ENCODE measurements at regions of chr6 and their contacts with region 1.

Region 1: DNA sequence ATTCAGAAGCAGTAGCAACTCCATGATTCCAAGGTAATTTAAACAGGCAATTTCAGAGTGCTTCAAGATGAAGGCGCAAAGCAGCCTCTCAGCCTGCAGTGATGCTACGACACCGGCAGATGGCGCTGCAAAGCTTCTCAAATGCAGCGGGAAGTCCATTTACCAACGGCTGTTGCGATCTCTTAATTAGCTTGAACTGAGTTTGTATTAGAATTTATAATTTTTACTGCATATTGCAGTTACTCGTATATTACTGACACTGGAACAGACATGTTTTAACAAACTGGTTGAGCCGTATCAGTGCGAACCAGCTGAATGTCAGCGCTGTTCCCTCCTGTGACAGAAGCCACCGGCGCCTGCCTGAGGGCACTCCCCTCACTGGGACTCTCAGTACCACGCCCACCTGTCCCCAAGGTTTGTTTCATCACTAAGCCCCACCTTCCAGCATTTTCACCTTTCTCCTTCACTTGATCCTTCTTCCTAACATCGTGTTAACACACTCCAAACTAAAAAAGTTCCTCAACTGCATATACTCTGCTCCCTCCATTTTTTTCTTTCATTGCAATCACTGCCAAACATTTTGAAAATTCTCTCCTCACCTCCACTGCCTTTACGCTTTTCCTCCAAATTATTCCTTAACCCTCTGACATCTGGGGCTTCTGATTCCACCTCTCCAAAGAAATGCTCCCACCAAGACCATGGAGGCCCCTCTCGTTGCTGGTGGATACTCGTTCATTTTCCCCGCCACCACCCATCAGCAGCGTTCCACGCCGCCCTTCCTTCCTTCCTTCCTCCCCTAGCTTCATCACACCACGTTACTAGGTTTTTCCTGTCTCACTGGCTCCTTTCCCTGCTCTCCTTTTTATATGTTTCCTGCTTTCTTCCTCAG is 14.5 kb downstream of the GNL1 start:
- DNase-seq: peak; percentile 62
- ATAC-seq: peak; percentile 88
- H3K4me3 ChIP-seq: peak overlapping the region; percentile 60
- H3K27ac ChIP-seq: no peak overlapping the region
- H3K4me1 ChIP-seq: peaks cover 7% of the 10 kb centered on the region; the same call in 1 of the 2 replicates
- H3K27me3 ChIP-seq: no peaks in the 10 kb centered on the region
- CTCF ChIP-seq: peak; percentile 94 to 99 (median 96)
- EP300 ChIP-seq: no peak
- POLR2A ChIP-seq: no peak
- RAD21 ChIP-seq: peak; percentile 68

Region 2: GRCh38 chr6:30154709-30155519 is 386.8 kb before region 1 on chr6:
- CTCF ChIA-PET with region 1: no interaction called
- POLR2A ChIA-PET with region 1: no interaction called
- RAD21 ChIA-PET with region 1: no interaction called
- SMC1A ChIA-PET with region 1: no interaction called
- in situ Hi-C with region 1: no loop called
- intact Hi-C with region 1: no loop called
- DNase-seq: no peak
- ATAC-seq: no peak
- H3K4me3 ChIP-seq: no peak overlapping the region
- H3K27ac ChIP-seq: no peak overlapping the region
- H3K4me1 ChIP-seq: peaks cover 4% of the 10 kb centered on the region; the same call in 1 of the 2 replicates
- H3K27me3 ChIP-seq: peaks cover 2% of the 10 kb centered on the region in 2 experiments; a peak in 3 of 4 replicates
- CTCF ChIP-seq: no peak
- EP300 ChIP-seq: no peak
- POLR2A ChIP-seq: no peak
- RAD21 ChIP-seq: no peak

Region 3: GRCh38 chr6:30340589-30341054 is 201.1 kb before region 1 on chr6:
- CTCF ChIA-PET with region 1: no interaction called
- POLR2A ChIA-PET with region 1: no interaction called
- RAD21 ChIA-PET with region 1: no interaction called
- SMC1A ChIA-PET with region 1: no interaction called
- in situ Hi-C with region 1: no loop called
- intact Hi-C with region 1: no loop called
- DNase-seq: no peak
- ATAC-seq: no peak
- H3K4me3 ChIP-seq: no peak overlapping the region
- H3K27ac ChIP-seq: no peak overlapping the region
- H3K4me1 ChIP-seq: no peaks in the 10 kb centered on the region
- H3K27me3 ChIP-seq: no peaks in the 10 kb centered on the region
- CTCF ChIP-seq: no peak
- EP300 ChIP-seq: no peak
- POLR2A ChIP-seq: no peak
- RAD21 ChIP-seq: no peak

Region 4: DNA sequence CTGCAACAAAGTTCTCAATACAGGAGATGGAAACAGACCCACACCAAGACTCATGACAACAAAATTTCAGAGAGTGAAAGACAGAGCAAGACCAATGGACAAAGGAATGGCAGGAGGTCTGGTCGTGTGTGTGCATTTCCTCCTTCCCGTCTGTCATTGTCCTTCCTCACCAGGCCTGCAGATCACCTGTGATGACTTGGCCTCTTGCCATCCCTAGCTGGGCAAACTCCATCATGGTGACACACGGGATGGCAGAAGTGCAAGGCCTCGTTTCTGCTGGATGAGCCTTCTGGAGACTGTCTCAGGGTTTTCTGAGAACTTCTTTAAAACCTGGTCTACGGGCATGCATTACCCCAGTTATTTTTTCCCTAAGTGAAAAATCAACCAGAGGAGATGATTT is 147.6 kb before region 1 on chr6:
- CTCF ChIA-PET with region 1: no interaction called
- POLR2A ChIA-PET with region 1: no interaction called
- RAD21 ChIA-PET with region 1: no interaction called
- SMC1A ChIA-PET with region 1: no interaction called
- in situ Hi-C with region 1: no loop called
- intact Hi-C with region 1: no loop called
- DNase-seq: no peak
- ATAC-seq: no peak
- H3K4me3 ChIP-seq: no peak overlapping the region
- H3K27ac ChIP-seq: no peak overlapping the region
- H3K4me1 ChIP-seq: no peaks in the 10 kb centered on the region
- H3K27me3 ChIP-seq: peaks cover 0 to 5% of the 10 kb centered on the region in 2 experiments; a peak in 3 of 4 replicates
- CTCF ChIP-seq: no peak
- EP300 ChIP-seq: no peak
- POLR2A ChIP-seq: no peak
- RAD21 ChIP-seq: no peak

Region 5: GRCh38 chr6:30489081-30490025 is 52.4 kb before region 1 on chr6 and contains the start of gene HLA-E:
- CTCF ChIA-PET with region 1: interaction called, 480 read pairs
- POLR2A ChIA-PET with region 1: interaction called, 15 read pairs
- RAD21 ChIA-PET with region 1: interaction called, 159 read pairs
- SMC1A ChIA-PET with region 1: interaction called, 221 read pairs
- in situ Hi-C with region 1: no loop called
- intact Hi-C with region 1: no loop called
- DNase-seq: peak; percentile 99
- ATAC-seq: peak; percentile 87
- H3K4me3 ChIP-seq: peak within 1 kb of the TSS; percentile 94
- H3K27ac ChIP-seq: peak within 1 kb of the TSS; percentile 93
- H3K4me1 ChIP-seq: peaks cover 18% of the 10 kb centered on the region
- H3K27me3 ChIP-seq: no peaks in the 10 kb centered on the region
- CTCF ChIP-seq: no peak
- EP300 ChIP-seq: no peak
- POLR2A ChIP-seq: peak; percentile 94
- RAD21 ChIP-seq: no peak
- polyA plus RNA-seq, gene HLA-E: 35.1 to 62.3 TPM

Region 6: DNA sequence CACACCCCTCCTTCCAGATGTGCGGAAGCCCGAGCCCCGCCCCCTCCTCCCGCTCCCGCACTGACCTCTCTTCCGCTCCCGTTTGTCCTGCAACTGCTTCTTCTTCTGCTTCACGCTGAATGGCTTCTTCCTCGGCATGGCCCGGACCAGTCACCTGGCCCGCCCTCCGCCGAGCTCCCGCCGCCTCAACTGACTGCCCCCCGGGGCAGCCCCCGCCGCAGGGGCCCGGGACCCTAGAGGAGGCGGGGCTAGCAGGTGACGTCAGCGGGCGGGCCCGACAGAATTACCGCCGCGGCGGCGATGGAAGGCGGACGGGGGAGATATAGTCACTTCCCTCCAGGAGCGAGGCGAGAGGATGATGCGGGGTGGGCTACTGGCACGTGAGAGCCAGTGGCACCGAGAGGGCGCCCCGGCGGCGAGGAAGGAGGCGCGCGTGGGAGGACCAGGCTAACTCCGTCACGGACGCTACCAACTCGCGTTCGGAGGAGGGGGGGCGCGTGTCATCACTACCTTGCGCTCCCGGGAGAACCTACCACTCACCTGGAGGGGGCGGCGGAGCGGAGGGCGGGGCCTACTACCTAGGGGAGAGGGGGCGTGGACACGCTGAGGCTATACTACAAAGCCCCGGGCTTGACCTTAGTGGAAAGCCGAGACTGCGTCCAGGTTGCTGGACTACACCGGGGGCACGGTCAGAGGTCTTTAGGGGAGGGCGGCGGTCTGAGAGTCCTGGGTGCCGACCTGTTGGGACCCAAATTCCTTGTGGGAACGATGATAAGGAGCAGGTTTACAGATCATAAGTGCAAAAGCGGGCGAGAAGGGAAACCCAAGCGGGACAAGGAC is 14.5 kb after region 1 on chr6 and contains the start of gene GNL1:
- CTCF ChIA-PET with region 1: interaction called, 121 read pairs
- POLR2A ChIA-PET with region 1: no interaction called
- RAD21 ChIA-PET with region 1: interaction called, 7 read pairs
- SMC1A ChIA-PET with region 1: interaction called, 16 read pairs
- in situ Hi-C with region 1: no loop called
- intact Hi-C with region 1: no loop called
- DNase-seq: peak; percentile 79
- ATAC-seq: peak; percentile 94
- H3K4me3 ChIP-seq: peak within 1 kb of the TSS; percentile 86
- H3K27ac ChIP-seq: peak within 1 kb of the TSS; percentile 93
- H3K4me1 ChIP-seq: peaks cover 8% of the 10 kb centered on the region; the same call in 1 of the 2 replicates
- H3K27me3 ChIP-seq: no peaks in the 10 kb centered on the region
- CTCF ChIP-seq: no peak
- EP300 ChIP-seq: no peak
- POLR2A ChIP-seq: peak; percentile 89
- RAD21 ChIP-seq: no peak
- polyA plus RNA-seq, gene GNL1: 0.18 to 1.4 TPM

Region 7: GRCh38 chr6:30600451-30600961 is 58.7 kb after region 1 on chr6:
- CTCF ChIA-PET with region 1: interaction called, 188 read pairs
- POLR2A ChIA-PET with region 1: interaction called, 3 read pairs
- RAD21 ChIA-PET with region 1: interaction called, 21 read pairs
- SMC1A ChIA-PET with region 1: interaction called, 35 read pairs
- in situ Hi-C with region 1: no loop called
- intact Hi-C with region 1: loop called (anchors 2 kb)
- DNase-seq: no peak
- ATAC-seq: no peak
- H3K4me3 ChIP-seq: no peak overlapping the region
- H3K27ac ChIP-seq: no peak overlapping the region
- H3K4me1 ChIP-seq: no peaks in the 10 kb centered on the region; the same call in 1 of the 2 replicates
- H3K27me3 ChIP-seq: no peaks in the 10 kb centered on the region
- CTCF ChIP-seq: no peak
- EP300 ChIP-seq: no peak
- POLR2A ChIP-seq: peak; percentile 47; the same call in 1 of the 2 replicates
- RAD21 ChIP-seq: no peak

Region 8: DNA sequence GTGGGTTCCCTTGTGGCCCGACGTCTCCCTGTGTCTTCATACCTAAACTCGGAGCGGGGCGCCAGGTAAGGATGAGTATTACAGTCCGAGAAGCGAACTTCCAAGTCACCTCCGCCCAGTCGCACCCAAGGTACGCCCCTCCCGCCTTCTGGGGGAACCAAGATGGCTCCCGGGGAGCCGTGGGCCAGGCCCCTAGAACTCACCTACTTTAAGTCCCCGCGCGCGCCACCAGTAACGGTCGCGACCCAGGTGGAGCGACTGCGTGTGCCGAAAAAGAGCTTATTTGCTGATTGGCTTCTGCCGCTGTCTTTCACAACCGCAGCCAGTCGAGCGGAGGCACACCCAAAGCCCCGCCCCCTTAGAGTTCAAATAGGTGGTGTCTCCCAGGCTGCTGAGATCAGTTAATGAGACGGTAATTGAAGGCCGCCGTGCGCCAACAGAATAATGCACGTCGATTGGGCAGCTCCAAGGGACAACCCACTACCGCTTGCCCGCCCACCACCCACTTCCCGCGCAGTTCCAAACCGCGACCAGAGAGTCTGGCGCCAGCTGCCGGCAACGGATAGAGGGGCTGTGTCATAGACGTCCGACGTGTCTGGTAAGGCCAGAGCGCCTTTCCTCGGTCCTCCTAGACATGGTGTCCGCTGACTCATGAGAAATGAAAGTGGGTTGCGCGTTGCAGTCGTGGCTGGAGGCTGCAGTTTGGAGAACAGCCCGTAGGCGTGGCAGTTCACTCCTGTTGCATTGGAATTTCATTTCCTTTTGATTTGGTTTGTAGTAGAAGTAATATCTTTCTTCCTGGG is 175.5 kb after region 1 on chr6 and contains the start of gene MDC1:
- CTCF ChIA-PET with region 1: interaction called, 25 read pairs
- POLR2A ChIA-PET with region 1: no interaction called
- RAD21 ChIA-PET with region 1: no interaction called
- SMC1A ChIA-PET with region 1: interaction called, 5 read pairs
- in situ Hi-C with region 1: no loop called
- intact Hi-C with region 1: no loop called
- DNase-seq: peak; percentile 99
- ATAC-seq: peak; percentile 76
- H3K4me3 ChIP-seq: peak within 1 kb of the TSS; percentile 83
- H3K27ac ChIP-seq: peak within 1 kb of the TSS; percentile 98
- H3K4me1 ChIP-seq: peaks cover 16% of the 10 kb centered on the region
- H3K27me3 ChIP-seq: no peaks in the 10 kb centered on the region
- CTCF ChIP-seq: peak; percentile 8 to 29 (median 17); a peak in 3 of 6 replicates
- EP300 ChIP-seq: peak; percentile 39 to 52; a peak in 1 of 4 replicates
- POLR2A ChIP-seq: peak; percentile 80
- RAD21 ChIP-seq: no peak; the same call in 1 of the 2 replicates
- polyA plus RNA-seq, gene MDC1: 5.1 to 6.5 TPM

Region 9: DNA sequence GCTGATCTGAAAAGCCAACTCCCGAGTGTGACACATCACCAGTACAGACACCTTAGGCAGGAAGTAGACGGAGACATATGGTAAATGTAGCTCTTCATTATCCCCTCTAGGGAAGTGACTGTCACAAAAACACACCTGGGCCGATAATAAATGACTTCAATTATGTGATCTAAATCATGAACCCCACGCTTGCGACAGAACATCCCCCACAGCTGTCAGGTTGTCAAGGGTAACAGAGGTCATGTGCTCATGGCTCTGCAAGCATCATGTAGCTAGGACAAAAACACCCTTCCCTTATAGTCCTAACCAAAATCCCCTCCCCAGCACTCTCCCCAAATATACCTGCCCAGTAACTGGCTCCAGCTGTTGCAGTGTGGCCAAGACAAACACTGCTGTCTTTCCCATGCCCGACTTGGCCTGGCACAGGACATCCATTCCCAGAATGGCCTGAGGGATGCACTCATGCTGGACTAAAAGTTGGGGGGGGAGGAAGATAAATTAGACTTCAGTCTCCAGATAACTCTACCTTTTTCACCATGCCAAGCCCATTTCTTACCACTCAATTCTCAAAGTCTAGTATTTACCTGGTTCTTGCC is 997.1 kb after region 1 on chr6:
- CTCF ChIA-PET with region 1: no interaction called
- POLR2A ChIA-PET with region 1: no interaction called
- RAD21 ChIA-PET with region 1: no interaction called
- SMC1A ChIA-PET with region 1: no interaction called
- in situ Hi-C with region 1: no loop called
- intact Hi-C with region 1: no loop called
- DNase-seq: no peak
- ATAC-seq: no peak
- H3K4me3 ChIP-seq: peak overlapping the region; percentile 94; the same call in 1 of the 2 replicates
- H3K27ac ChIP-seq: no peak overlapping the region
- H3K4me1 ChIP-seq: no peaks in the 10 kb centered on the region
- H3K27me3 ChIP-seq: no peaks in the 10 kb centered on the region
- CTCF ChIP-seq: no peak
- EP300 ChIP-seq: no peak
- POLR2A ChIP-seq: no peak; the same call in 1 of the 2 replicates
- RAD21 ChIP-seq: no peak